ENCODE measurements at regions of chr1 and their contacts with region 1.

Region 1: GRCh38 chr1:201386208-201386607 is 8.7 kb upstream of the TNNT2 start:
- DNase-seq: no peak

Region 2: DNA sequence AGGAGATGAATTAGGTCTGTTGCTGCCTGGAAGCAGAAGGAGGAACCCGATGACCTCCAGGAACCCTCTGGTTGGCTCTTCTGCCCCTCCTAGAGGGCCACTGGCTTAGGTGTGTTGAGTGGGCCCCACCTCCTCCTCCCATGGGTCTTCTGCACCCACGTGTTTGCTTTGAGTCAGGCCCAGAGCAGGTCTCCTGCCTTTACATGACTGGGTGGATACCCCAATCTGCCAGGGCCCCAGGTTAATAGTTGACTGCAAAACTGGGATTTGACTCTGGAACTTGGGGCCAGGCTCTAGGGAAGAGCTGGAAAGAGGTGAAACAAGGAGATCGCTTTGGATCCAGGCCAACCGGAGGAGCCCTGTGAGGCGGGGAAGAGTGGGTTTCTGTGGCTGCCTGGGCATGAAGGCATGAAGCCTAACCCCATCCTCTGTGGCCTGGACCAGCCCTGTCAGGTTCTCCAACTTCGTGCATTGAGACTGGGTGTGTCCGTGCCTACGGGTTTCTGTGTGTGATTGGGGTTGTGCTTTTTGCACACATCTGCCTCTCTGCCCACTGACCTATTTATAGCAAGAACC is 20.7 kb after region 1 on chr1:
- intact Hi-C with region 1: loop called (anchors 2 kb)
- DNase-seq: no peak

Region 3: GRCh38 chr1:201640624-201641023 is 254.4 kb after region 1 on chr1:
- intact Hi-C with region 1: no loop called
- DNase-seq: no peak

Measured in cardiac septum (tissue), 1 donor.